ENCODE measurements at regions of chr19 and their contacts with region 1.

Region 1: DNA sequence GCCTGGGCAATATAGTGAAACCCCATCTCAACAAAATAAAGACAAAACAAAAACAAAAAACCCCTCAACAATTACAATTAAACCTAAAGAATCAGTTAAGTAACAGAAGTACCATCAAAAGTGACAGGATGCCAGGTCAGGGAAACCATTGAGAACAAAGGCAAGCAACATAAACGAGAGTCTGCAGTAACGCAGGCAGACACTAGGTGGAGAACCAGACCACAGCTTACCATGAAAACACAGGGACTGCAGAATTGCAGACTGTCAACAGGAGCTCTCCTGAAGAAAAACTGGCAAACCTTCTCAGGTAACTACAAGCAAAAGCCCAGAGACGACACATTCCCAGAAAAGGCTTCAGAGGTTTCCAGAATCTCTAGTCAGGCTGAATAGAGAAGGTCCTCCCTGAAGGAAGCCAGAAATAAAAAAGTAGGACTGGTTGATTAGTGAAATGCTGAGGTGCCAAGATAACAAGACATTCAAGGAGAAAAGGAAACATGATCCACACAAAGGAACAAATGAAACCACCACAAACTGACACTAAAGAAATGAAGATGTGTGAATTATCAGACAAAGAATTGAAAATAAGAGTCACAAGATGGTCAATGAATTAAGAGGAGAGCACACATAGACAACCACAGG is 2.2 kb upstream of the ZNF665 start:
- DNase-seq: peak; percentile 65
- H3K4me3 Mint-ChIP-seq: peak overlapping the region; percentile 46
- H3K27ac Mint-ChIP-seq: no peak overlapping the region
- H3K4me1 Mint-ChIP-seq: peaks cover 32% of the 10 kb centered on the region
- H3K27me3 Mint-ChIP-seq: no peaks in the 10 kb centered on the region

Region 2: DNA sequence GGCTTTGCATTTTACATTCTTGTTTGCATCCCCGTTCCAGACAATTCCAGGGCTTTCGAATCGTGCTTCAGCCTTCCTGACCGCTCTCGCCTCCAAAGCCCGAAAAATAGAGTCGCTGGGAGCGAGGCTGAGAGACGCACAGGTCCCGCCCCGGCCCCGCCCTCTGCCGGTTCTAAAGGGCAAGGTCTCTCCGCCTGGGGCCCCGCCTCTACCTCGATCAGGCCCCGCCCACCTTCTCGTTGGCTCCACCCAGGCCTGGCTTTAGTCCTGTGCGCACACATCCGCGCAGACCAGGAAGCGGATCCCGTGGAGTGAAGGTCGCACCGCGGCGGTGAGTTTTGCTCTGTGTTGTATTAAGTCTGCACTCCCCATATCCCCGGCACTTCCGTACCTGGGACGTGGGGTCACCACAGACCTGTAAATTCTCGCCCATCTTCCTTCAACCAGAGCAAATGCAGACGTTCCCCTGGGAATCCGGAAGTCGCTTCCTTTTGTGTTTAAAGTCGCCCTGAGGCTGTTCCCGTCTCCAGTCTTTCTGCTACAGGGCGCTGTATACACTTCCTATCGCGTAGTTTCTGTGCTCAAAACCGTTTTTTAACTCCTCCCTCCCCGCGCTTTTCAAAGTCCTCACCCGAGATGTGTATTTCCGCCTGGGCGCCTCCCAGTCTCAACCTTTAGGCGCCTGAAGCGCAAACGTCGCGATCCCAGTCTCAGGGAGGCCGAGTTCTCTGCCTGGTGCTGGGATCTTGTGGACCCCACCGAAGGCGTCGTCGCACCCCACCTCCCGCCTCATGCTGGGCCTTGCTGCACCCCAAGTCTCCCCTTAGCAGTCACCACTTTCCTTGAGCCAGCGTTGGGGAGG is 625.2 kb before region 1 on chr19 and contains the start of gene ZNF701:
- intact Hi-C with region 1: loop called (anchors 1 kb)
- DNase-seq: peak; percentile 94
- H3K4me3 Mint-ChIP-seq: peak within 1 kb of the TSS; percentile 94
- H3K27ac Mint-ChIP-seq: peak within 1 kb of the TSS; percentile 94
- H3K4me1 Mint-ChIP-seq: peaks cover 20% of the 10 kb centered on the region
- H3K27me3 Mint-ChIP-seq: no peaks in the 10 kb centered on the region
- total RNA-seq, gene ZNF701: 16.0 and 18.3 TPM in 2 replicates

Region 3: GRCh38 chr19:52993323-52994178 is 201.8 kb before region 1 on chr19:
- intact Hi-C with region 1: loop called (anchors 10 kb)
- DNase-seq: peak; percentile 79
- H3K4me3 Mint-ChIP-seq: peak overlapping the region; percentile 82
- H3K27ac Mint-ChIP-seq: no peak overlapping the region
- H3K4me1 Mint-ChIP-seq: peaks cover 6% of the 10 kb centered on the region
- H3K27me3 Mint-ChIP-seq: peaks cover 4% of the 10 kb centered on the region

Region 4: DNA sequence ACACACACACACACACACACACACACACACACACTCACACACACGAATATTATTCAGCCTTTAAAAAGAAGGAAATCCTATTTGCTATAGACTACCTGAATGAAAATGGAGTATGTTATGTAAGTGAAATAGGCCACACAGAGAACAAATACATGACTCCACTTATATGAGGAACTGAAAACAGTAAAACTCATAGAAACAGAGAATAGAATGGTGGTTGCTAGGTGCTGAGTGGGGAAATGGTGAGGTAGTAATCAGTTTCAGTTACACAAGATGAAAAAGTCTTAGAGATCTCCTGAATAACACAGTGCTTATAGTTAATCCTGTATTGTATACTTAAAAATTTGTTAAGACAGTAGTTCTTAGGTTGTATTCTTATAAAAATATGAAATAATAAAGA is 51.1 kb after region 1 on chr19:
- intact Hi-C with region 1: no loop called
- DNase-seq: no peak
- H3K4me3 Mint-ChIP-seq: no peak overlapping the region
- H3K27ac Mint-ChIP-seq: no peak overlapping the region
- H3K4me1 Mint-ChIP-seq: no peaks in the 10 kb centered on the region
- H3K27me3 Mint-ChIP-seq: no peaks in the 10 kb centered on the region

Region 5: GRCh38 chr19:53394974-53395839 is 199.8 kb after region 1 on chr19 and contains the start of gene ZNF765:
- intact Hi-C with region 1: loop called (anchors 1 kb)
- DNase-seq: peak; percentile 93
- H3K4me3 Mint-ChIP-seq: peak within 1 kb of the TSS; percentile 98
- H3K27ac Mint-ChIP-seq: peak within 1 kb of the TSS; percentile 85
- H3K4me1 Mint-ChIP-seq: peaks cover 27% of the 10 kb centered on the region
- H3K27me3 Mint-ChIP-seq: no peaks in the 10 kb centered on the region
- total RNA-seq, gene ZNF765: 9.2 and 10.8 TPM in 2 replicates

Region 6: GRCh38 chr19:53511933-53512374 is 316.6 kb after region 1 on chr19:
- intact Hi-C with region 1: loop called (anchors 1 kb)
- DNase-seq: no peak
- H3K4me3 Mint-ChIP-seq: no peak overlapping the region
- H3K27ac Mint-ChIP-seq: no peak overlapping the region
- H3K4me1 Mint-ChIP-seq: no peaks in the 10 kb centered on the region
- H3K27me3 Mint-ChIP-seq: no peaks in the 10 kb centered on the region

Region 7: DNA sequence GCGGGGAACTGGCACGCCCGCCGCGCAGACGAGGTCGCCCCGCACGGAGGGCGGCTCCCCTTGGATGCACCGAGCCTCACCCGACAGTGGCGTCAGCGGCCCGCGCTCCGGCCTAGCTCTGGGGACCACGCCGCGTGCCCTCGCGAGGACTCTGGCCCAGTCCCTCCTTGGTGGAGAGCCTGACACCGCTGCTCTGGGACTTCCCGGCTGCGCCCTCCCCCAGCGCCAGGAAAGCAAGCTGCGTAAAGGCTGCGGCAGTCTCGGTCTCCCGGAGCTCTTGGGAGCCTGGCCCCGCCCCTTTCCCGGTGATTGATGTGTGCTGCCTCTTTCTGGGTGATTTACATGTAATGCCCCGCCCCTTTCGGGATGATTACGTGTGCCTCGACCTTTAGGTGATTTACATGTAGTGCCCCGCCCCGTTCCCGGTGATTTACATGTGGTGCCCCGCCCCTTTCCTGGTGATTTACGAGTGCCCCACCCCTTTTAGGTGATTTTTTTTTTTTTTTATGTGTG is 1268.2 kb after region 1 on chr19 and contains the start of gene LENG9:
- intact Hi-C with region 1: loop called (anchors 10 kb)
- DNase-seq: peak; percentile 96
- H3K4me3 Mint-ChIP-seq: peak within 1 kb of the TSS; percentile 84
- H3K27ac Mint-ChIP-seq: peak within 1 kb of the TSS; percentile 89
- H3K4me1 Mint-ChIP-seq: peaks cover 25% of the 10 kb centered on the region
- H3K27me3 Mint-ChIP-seq: peaks cover 21% of the 10 kb centered on the region
- total RNA-seq, gene LENG9: 8.4 and 11.5 TPM in 2 replicates

Measured in activated T-helper 1 cell treated with anti-CD3 and anti-CD28 coated beads, Interleukin-12 subunit alpha, Interleukin-12 subunit beta, Interleukin-2, Interleukin-4 antibody, amounts not matched to agents 30 ng/mL and 10 ng/mL and 1 ng/mL, durations not matched to agents 14 hours and 24 hours and 36 hours (primary cell).